OCI-LY7 (cell line): ENCODE measurements at regions of chr17 and their contacts with region 1.

Region 1: GRCh38 chr17:3913531-3914311 is 2.5 kb downstream of the P2RX1 start:
- DNase-seq: peak; percentile 88
- H3K4me3 ChIP-seq: peak overlapping the region; percentile 44
- H3K27ac ChIP-seq: peak overlapping the region; percentile 68
- H3K4me1 ChIP-seq: peaks cover 58% of the 10 kb centered on the region
- CTCF ChIP-seq: peak; percentile 99

Region 2: DNA sequence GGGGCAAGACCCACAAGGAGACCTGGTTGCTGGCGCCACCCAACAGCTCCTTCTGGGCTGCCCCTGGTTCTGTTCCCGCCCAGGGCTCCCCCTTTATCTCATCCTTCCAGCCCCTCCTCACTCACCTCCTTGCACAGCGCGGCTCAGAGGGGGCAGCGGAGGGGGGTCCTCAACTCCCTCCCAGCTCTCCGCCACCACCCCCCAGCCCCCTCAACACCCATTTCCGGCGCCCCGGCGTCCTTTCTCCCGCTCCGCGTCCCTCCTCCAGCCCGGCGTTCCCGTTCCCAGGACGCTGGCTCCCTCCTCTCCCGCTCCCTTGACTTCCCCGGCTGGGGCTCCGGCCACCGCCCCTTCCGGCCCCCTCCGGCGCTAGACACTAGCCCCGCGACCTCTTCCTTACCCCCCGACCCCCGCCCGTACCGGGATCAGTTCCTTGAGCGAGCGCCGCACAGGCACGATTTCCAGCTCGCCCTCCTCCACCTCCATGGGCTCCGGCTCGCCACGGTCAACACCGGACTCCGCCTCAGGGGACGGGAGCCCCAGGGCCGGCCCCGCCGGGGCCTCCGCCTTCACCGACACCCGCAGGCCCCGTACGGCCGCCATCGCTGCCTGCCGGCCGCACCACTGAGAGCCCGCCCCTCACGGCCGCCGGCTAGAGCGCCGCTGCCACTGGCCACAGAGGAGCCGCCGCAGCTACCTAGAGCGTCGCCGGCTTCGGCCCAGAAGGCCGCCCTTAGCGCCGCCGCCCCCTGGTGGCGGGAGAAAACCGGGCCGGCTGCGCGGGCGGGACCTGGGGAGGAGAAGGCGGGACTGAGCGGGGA is 67.9 kb before region 1 on chr17 and contains the start of gene NCBP3:
- CTCF ChIA-PET with region 1: no interaction called
- POLR2A ChIA-PET with region 1: interaction called, 3 read pairs
- intact Hi-C with region 1: loop called (anchors 5 kb)
- DNase-seq: peak; percentile 96
- H3K4me3 ChIP-seq: peak within 1 kb of the TSS; percentile 94
- H3K27ac ChIP-seq: peak within 1 kb of the TSS; percentile 38
- H3K4me1 ChIP-seq: peaks cover 14% of the 10 kb centered on the region
- CTCF ChIP-seq: peak; percentile 87
- total RNA-seq, gene NCBP3: 24.5 and 56.5 TPM in 2 replicates

Region 3: DNA sequence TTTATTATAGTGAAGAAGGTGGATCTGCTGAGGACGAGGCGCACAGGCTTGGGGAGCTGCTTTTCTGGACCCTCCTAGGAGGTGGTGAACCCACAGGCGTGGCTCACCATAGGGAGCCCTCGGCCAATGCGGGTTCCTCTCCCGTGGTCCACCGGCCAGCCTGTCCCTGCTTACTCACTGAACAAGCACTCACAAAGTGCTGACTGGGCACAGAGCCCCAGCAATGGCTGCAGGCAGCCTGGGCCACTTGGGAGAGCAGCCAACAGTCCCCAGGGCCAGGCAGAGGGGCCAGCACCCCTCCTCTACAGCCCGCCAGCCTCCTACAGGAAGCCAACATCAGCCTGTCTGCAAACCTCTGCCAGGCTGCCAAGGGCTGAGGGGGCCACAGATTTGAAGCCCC is 48.5 kb before region 1 on chr17:
- CTCF ChIA-PET with region 1: no interaction called
- POLR2A ChIA-PET with region 1: no interaction called
- intact Hi-C with region 1: loop called (anchors 1 kb)
- DNase-seq: no peak
- H3K4me3 ChIP-seq: no peak overlapping the region
- H3K27ac ChIP-seq: no peak overlapping the region
- H3K4me1 ChIP-seq: no peaks in the 10 kb centered on the region
- CTCF ChIP-seq: no peak

Region 4: GRCh38 chr17:3896108-3896967 is 17.4 kb before region 1 on chr17:
- CTCF ChIA-PET with region 1: interaction called, 5 read pairs
- POLR2A ChIA-PET with region 1: interaction called, 5 read pairs
- intact Hi-C with region 1: loop called (anchors 2 kb)
- DNase-seq: no peak
- H3K4me3 ChIP-seq: no peak overlapping the region
- H3K27ac ChIP-seq: peak overlapping the region; percentile 18
- H3K4me1 ChIP-seq: peaks cover 41% of the 10 kb centered on the region
- CTCF ChIP-seq: no peak

Region 5: DNA sequence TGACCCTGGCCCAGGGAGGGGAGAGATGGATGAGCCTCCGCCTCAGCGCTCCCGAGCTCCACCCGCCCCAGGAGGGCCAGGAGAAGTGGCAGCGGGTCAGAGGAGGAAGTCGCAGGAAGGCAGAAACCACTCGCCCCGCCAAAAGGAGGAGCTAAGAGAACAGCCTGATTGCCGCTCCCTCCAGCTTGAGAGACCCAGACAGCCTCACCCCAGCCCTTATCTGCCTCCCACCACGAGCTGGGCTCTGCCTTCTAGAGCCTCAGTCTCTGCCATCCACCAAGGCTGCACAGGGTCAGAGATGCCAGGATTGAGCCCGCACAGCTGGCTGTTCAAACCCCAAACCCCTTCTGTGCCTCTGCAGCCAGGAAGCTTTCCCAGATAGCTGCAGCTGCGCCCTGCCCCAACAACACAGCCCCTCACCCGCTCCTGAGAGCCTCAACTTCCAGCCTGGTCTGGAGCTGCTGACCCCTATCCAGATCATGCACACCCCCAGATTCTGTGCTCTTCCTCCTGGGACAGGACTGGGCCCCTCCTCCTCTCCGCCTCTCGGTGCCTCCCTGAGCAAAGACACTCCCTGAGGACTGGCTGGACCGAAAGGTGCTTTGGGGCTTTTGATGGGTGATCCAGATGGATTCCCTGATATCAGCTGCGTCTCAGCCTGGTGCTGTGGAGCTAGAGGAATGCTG is 51.5 kb after region 1 on chr17:
- CTCF ChIA-PET with region 1: interaction called, 9 read pairs
- POLR2A ChIA-PET with region 1: interaction called, 9 read pairs
- intact Hi-C with region 1: loop called (anchors 1 kb)
- DNase-seq: peak; percentile 87
- H3K4me3 ChIP-seq: peak overlapping the region; percentile 87
- H3K27ac ChIP-seq: peak overlapping the region; percentile 94
- H3K4me1 ChIP-seq: peaks cover 51% of the 10 kb centered on the region
- CTCF ChIP-seq: no peak; the same call in 1 of the 2 replicates

Region 6: GRCh38 chr17:4004517-4005295 is 91.0 kb after region 1 on chr17:
- CTCF ChIA-PET with region 1: no interaction called
- POLR2A ChIA-PET with region 1: no interaction called
- intact Hi-C with region 1: loop called (anchors 1 kb)
- DNase-seq: peak; percentile 72
- H3K4me3 ChIP-seq: no peak overlapping the region
- H3K27ac ChIP-seq: no peak overlapping the region
- H3K4me1 ChIP-seq: peaks cover 13% of the 10 kb centered on the region
- CTCF ChIP-seq: peak; percentile 96